ENCODE measurements at regions of chr6 and their contacts with region 1.

Region 1: DNA sequence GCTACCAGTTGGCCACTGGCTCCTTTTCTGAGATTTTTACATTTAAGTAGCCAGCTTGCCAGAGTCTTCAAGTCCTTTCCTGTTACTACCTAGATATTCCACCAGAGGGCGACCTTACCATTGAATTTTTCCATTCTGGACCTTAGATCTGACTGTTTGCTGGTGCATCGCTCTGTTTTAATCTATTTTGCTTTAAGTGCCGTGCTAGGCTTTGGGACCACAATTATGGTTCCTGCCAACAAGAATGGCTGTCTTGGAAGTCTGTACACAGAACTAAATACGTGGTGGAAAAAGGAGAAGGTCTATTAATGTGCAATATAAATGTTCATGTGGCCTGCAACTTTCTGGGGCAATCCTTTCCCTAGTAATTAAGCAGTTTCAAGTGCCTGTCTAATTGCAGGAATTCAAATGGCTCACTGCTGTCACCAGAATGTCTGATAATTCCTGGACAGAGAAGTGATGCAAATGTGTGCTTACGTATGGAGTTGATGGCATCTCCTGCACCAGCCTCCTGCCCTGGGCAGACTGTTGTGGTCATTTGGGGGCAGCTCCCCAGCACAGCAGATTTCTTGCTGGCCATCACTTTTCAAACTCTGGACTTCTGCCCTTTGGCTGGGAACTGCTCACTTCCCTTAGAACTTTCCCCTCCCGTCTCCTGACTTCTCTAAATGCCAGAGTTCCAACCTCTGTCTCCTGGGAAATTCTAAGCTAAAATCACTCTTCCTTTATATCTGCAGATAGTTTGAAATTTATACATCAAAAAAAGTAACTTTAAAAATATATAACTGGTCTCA is 5.6 kb upstream of the HLA-DOA start:
- DNase-seq: peak in 1 of 5 donors; percentile 50
- H3K4me3 ChIP-seq: no peak overlapping the region
- H3K27ac ChIP-seq: no peak overlapping the region
- H3K4me1 ChIP-seq: peaks cover 2% of the 10 kb centered on the region
- H3K27me3 ChIP-seq: no peaks in the 10 kb centered on the region
- CTCF ChIP-seq: peak; percentile 57 to 71 (median 61)
- EP300 ChIP-seq: no peak
- POLR2A ChIP-seq: no peak

Region 2: GRCh38 chr6:33082702-33083101 is 67.7 kb after region 1 on chr6:
- intact Hi-C with region 1: loop called in 2 of 4 experiments (anchors 10 kb)
- DNase-seq: no peak
- H3K4me3 ChIP-seq: no peak overlapping the region
- H3K27ac ChIP-seq: no peak overlapping the region
- H3K4me1 ChIP-seq: peaks cover 2% of the 10 kb centered on the region
- H3K27me3 ChIP-seq: no peaks in the 10 kb centered on the region
- CTCF ChIP-seq: peak in 2 of 3 donors; percentile 8 to 76
- EP300 ChIP-seq: no peak
- POLR2A ChIP-seq: no peak

Region 3: GRCh38 chr6:33147807-33148666 is 133.0 kb after region 1 on chr6:
- intact Hi-C with region 1: loop called in 3 of 4 experiments (anchors 10 kb)
- DNase-seq: no peak
- H3K4me3 ChIP-seq: no peak overlapping the region
- H3K27ac ChIP-seq: no peak overlapping the region
- H3K4me1 ChIP-seq: no peaks in the 10 kb centered on the region
- H3K27me3 ChIP-seq: no peaks in the 10 kb centered on the region
- CTCF ChIP-seq: peak; percentile 32 to 60 (median 54)
- EP300 ChIP-seq: no peak
- POLR2A ChIP-seq: no peak

Measured in ovary (tissue), 10 donors.